A673 (cell line): ENCODE measurements at regions of chr7 and their contacts with region 1.

Region 1: DNA sequence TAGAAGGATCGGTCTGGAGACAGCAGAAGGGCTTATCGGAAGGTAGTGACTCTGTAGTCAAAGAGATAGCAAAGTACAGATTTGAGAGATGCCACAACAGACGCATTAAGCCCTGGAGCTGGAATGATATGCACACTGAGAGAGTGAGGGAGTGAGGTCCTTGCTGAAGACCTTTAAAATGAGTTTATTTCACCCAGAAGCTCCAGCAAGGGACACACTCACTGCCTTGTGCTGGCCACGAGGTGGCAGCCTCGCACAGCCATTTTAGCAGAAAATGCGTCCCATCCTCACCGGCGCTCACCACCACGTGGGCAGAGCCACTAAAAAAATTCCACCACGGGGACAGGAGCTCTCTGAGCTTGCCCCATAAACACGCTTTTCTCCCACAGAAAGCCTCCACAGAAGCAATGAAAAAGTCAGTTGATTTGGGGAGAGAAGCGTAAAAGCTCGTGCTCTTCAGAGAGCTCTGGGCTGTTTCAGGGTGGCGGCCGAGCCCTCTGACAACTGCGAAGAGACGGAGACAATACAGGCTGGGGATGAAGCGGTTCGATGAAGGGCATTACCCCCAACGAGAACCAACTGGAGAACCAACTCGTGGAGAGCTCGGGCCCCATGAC is 163.0 kb upstream of the KLF14 start:
- DNase-seq: peak; percentile 94
- H3K4me3 ChIP-seq: no peak overlapping the region
- H3K27ac ChIP-seq: peak overlapping the region; percentile 73
- H3K4me1 ChIP-seq: peaks cover 82% of the 10 kb centered on the region
- H3K27me3 ChIP-seq: no peaks in the 10 kb centered on the region
- CTCF ChIP-seq: peak; percentile 86

Region 2: DNA sequence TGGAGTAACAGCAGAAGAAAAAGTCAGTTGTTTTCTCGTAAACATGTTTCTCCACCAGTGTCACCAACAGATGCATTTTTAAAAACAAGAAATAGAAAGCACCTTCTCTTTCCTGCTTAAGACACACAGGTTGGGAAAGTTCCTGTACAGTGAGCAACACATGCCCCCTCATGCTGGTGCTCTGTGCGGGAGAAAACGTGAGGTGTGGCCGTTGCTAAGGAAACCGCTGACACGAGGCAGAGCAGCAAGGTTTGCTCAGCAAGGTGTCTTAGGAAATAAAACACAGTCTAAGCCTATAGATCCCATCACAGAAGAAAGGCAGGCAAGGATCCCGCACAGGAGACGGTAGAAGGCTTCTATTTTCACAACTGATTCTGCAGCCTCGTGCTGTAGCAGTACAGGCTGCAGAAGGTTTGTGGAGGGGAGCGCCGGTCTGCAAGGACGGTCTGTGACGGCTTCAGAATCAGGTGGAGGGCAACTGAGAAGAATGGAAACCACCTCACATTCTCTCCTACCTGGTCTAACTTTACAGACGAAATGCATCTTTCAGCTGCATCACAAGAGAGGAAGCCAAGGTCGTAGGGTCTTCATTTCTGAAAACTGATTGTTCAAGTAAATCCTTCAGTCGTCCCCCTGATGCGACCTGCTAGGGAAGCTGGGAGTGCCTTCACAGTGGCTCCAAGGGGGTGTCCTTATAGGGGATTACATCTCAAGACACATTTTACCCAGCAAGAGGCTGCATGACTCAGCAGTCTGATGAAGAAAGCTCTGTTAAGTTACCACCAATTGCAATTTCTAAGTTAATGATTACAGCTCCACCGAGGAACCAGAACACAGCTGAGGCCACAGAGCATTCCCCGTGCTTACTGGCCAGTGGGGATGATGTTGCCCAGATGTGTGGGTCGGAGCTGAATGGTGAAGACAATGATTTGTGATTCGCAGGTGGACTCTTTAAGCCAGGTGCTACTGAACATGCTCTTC is 12.3 kb before region 1 on chr7:
- CTCF ChIA-PET with region 1: interaction called, 11 read pairs
- POLR2A ChIA-PET with region 1: no interaction called
- intact Hi-C with region 1: no loop called
- DNase-seq: peak; percentile 75
- H3K4me3 ChIP-seq: no peak overlapping the region
- H3K27ac ChIP-seq: peak overlapping the region; percentile 76
- H3K4me1 ChIP-seq: peaks cover 94% of the 10 kb centered on the region
- H3K27me3 ChIP-seq: no peaks in the 10 kb centered on the region
- CTCF ChIP-seq: no peak

Region 3: DNA sequence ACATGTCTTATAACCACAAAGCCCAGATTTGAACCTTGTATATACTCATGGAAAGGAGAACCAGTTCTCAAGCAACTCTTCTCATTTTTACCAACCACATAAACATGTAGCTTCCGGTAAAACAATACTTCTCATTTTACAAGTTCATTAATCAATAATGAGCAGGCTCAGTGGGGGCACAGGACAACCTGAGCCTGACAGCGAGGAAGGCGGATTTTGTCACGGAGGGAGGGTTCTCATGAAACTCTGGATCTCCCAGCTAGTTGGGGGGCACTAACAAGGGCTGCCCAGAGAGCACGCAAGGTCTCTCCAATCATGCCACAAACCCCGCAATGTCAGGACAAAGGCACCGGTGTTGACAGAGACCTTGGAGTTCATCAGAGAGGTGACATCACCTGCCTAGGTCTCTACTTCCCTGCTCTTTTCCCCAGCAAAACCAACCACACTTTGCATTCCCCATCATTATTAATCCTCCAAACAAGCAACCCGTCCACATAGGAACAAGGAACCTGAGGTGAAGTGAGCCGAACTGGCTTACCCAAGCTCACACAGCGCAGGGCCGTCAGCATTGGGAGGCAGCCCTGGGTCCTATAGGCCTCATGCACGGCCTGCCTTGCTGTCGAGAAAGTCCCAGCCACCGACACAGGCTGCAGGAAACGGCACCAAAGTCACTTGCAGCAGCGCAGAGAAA is 29.1 kb after region 1 on chr7:
- CTCF ChIA-PET with region 1: interaction called, 3 read pairs
- POLR2A ChIA-PET with region 1: interaction called, 16 read pairs
- intact Hi-C with region 1: no loop called
- DNase-seq: peak; percentile 32
- H3K4me3 ChIP-seq: no peak overlapping the region
- H3K27ac ChIP-seq: peak overlapping the region; percentile 94
- H3K4me1 ChIP-seq: peaks cover 90% of the 10 kb centered on the region
- H3K27me3 ChIP-seq: no peaks in the 10 kb centered on the region
- CTCF ChIP-seq: no peak

Region 4: DNA sequence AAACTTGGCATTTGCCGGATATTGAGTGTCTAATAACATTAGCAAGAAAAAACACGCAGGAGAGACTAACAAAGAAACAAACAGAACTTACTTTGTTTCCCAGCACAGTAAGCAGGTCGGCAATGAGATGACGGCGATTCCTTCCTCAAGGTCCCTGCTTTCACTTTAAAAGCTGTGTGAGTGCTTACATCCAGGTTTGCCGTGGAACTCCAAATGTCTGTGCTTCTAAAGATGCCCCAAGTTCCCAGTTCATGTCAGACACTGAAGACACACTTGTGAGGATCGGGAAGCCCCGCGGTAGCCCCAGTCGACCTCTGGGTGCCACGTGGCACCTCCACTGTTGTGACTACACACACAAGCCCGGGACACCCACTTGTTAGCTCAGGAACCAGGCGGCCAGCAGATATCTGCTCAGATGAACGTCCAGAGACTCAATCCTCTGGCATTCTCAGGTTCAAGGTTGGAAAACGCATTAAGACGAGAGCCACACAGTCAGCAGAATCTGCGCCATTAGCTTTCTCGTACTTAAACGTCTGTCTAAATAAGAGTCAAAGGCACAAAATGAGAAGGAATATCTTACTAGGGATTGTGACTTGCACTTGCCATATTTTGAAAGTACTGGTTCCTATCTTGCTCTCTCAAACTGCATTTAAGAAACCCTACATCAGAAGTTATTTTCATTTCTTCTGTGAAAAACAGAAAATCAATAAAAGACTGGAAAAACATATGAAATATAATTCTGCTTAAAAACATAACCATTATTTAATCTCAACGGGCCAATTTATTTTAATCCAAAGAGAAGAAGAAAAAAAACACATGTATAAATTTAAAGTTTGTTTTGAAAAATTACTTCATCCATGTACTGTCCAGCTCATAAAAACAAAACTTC is 44.6 kb after region 1 on chr7:
- CTCF ChIA-PET with region 1: interaction called, 14 read pairs
- POLR2A ChIA-PET with region 1: interaction called, 3 read pairs
- intact Hi-C with region 1: no loop called
- DNase-seq: peak; percentile 76
- H3K4me3 ChIP-seq: peak overlapping the region; percentile 55
- H3K27ac ChIP-seq: peak overlapping the region; percentile 94
- H3K4me1 ChIP-seq: peaks cover 86% of the 10 kb centered on the region
- H3K27me3 ChIP-seq: no peaks in the 10 kb centered on the region
- CTCF ChIP-seq: no peak

Region 5: GRCh38 chr7:131007394-131008330 is 110.7 kb after region 1 on chr7:
- CTCF ChIA-PET with region 1: interaction called, 11 read pairs
- POLR2A ChIA-PET with region 1: no interaction called
- intact Hi-C with region 1: loop called (anchors 1 kb)
- DNase-seq: peak; percentile 95
- H3K4me3 ChIP-seq: peak overlapping the region; percentile 1
- H3K27ac ChIP-seq: peak overlapping the region; percentile 95
- H3K4me1 ChIP-seq: peaks cover 58% of the 10 kb centered on the region
- H3K27me3 ChIP-seq: no peaks in the 10 kb centered on the region
- CTCF ChIP-seq: peak; percentile 67

Region 6: DNA sequence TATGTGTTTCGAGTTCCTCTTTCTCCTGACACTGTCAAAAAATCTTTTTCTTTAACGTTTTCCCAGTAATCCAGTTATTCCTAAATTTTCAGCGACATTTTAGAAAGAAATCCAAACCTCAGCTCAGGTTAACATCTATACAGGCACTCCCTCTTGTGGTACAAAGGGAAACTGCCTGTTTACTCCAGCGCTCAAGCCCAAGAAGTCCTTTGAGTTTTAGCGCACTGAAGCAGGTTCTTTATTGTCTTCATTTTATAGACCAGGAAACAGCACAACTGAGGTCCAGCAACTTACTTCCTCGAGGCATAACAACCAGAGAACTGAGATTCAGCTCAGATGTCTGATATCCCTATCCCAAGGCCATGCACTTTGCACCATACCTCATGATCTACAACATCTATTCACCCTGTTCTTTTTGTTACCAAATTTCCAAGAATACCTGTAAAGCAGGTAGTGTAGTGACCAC is 143.5 kb after region 1 on chr7:
- CTCF ChIA-PET with region 1: interaction called, 12 read pairs
- POLR2A ChIA-PET with region 1: no interaction called
- intact Hi-C with region 1: loop called (anchors 1 kb)
- DNase-seq: peak; percentile 86
- H3K4me3 ChIP-seq: no peak overlapping the region
- H3K27ac ChIP-seq: peak overlapping the region; percentile 89
- H3K4me1 ChIP-seq: peaks cover 56% of the 10 kb centered on the region
- H3K27me3 ChIP-seq: no peaks in the 10 kb centered on the region
- CTCF ChIP-seq: peak; percentile 93

Region 7: DNA sequence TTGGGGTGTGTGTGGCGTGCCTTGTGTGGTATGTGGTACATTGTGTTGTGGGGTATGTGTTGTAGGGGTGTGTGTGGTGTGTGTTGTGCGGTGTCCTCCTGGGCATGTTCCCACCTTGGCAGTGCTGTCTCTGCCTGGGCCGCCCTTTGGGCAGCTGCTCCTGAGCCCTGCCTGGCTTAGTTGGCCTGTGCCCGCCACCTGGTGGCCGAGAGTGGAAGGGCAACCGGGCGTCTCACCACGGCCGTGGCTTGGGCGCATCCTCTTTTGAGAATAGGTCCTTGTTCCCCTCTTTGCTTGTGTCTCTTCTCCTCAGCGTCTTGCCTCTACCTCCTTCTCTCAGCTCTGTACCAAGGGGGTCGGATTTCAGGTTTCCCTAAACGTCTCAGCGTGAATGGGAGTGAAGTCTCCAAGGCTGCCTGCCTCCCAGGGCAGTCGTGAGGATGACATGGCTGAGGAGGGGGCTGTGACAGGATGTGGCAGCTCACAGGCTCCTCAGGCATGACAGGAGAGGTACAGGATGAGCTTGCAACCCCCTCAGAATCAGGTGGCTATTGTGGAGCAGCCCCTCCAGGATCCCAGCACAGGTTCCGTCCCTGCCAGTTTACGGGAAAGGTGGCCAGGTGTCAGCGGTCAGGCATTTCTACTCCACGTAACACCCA is 757.8 kb after region 1 on chr7:
- CTCF ChIA-PET with region 1: no interaction called
- POLR2A ChIA-PET with region 1: no interaction called
- intact Hi-C with region 1: loop called (anchors 10 kb)
- DNase-seq: peak; percentile 92
- H3K4me3 ChIP-seq: no peak overlapping the region
- H3K27ac ChIP-seq: no peak overlapping the region
- H3K4me1 ChIP-seq: no peaks in the 10 kb centered on the region
- H3K27me3 ChIP-seq: no peaks in the 10 kb centered on the region
- CTCF ChIP-seq: peak; percentile 90